ENCODE measurements at regions of chr6 and their contacts with region 1.

Region 1: DNA sequence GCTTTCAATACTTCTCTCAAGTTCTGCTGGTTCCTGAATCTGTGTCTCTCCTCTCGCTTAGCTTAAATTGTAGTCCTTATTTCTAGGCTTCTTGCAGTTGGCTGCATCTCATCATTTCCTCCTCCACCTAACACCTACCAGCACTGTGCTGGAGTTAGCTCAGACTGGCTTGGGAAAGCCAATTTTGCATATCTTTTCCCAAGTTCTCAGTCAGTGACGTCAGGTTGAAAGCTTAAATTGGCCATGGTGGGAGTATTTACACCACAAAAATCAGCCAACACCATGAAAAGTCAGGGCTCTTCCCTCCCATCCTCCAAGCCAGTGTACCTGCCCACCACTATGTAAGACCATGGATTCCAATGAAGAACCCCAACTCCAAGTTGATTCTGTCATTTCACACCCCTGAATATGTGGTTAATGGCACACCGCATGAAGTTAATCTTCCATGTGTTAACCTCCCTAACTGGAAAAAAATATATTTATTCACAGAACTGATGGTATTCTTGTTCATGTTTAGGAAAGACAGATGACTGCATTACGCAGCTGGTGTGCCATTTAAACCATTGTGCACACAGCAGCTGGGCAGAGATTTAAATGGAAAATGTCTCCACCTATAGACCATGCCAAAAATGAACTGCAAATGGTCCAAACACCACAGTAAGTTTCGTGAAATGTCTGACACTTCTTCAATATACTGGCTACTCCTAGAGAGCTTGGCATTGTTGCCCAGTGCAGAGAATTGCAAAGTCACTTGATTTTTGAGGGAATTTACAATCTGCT is 274.1 kb upstream of the MAP3K7 start:
- DNase-seq: no peak
- H3K4me3 Mint-ChIP-seq: no peak overlapping the region
- H3K27ac Mint-ChIP-seq: no peak overlapping the region
- H3K4me1 Mint-ChIP-seq: no peaks in the 10 kb centered on the region
- H3K27me3 Mint-ChIP-seq: peaks cover 5% of the 10 kb centered on the region

Region 2: DNA sequence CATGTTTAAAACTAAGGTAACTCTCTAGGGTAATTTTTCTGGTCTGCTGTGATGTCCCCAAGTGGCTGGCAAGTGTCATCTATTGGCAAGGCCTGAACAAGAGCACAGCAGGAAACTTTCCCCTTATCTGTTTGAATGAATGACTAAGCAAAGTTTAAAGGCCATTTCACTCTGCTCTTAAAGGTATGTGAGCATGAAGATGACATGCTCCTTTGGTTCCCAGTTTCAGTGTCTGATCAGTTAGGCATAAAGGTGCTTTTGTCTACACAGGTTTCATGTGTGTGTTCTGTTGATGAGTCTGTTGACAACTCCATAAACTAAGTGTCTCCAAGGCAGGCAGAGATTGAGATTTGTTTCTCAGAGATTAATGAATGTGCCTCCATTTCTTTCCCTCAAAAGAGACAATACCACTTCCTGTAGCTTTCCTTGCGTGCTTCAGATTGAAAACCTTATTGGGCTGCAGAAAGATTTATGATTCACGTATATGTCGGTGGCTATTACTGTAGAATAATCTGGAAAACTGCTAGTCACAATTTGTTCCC is 358.1 kb before region 1 on chr6:
- CTCF ChIA-PET with region 1: no interaction called
- intact Hi-C with region 1: loop called (anchors 10 kb)
- DNase-seq: no peak
- H3K4me3 Mint-ChIP-seq: no peak overlapping the region
- H3K27ac Mint-ChIP-seq: peak overlapping the region; percentile 9
- H3K4me1 Mint-ChIP-seq: peaks cover 11% of the 10 kb centered on the region
- H3K27me3 Mint-ChIP-seq: no peaks in the 10 kb centered on the region

Region 3: DNA sequence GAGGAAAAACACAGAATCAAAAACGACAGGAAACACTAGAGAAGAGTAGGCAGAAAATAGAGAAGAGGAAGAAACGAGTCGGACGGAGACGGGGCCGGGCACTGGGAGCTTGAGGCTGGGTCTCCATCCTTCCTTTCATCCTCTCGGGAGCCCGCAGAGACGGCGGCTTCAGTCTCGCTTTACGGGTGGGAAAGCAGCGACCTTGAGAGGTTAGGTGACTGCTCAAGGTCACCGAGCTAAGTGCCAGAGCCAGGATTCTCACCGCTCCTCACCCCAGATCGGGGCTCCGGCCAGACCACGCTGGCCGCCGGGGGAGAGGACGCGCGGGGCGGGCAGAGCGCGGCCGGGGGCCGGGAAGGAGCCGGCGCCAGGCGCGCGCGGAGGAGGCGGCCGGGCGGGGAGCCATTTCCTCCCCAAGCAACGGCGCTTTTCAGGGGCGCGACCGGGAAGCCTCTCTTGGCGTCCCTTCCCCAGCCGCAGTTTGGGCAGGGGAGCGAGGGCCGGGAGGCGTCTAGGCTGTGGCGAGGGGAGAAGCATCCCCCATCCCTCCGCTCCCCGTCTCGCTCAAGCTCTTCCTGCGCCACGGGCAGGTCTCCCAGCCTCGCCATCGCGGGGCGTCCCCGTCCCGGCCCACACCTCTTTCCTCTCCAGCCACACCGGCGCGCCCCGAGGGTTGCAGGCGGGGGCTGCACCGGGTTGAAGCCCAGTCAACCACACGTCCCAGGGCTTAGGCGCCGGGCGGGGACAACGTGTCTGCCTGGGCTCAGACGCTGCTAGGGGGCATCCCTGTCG is 250.1 kb before region 1 on chr6:
- CTCF ChIA-PET with region 1: interaction called, 7 read pairs
- intact Hi-C with region 1: loop called (anchors 1 kb)
- DNase-seq: peak; percentile 54
- H3K4me3 Mint-ChIP-seq: peak overlapping the region; percentile 80
- H3K27ac Mint-ChIP-seq: no peak overlapping the region
- H3K4me1 Mint-ChIP-seq: peaks cover 11% of the 10 kb centered on the region
- H3K27me3 Mint-ChIP-seq: peaks cover 39% of the 10 kb centered on the region

Measured in activated naive CD4-positive, alpha-beta T cell treated with anti-CD3 and anti-CD28 coated beads for 36 hours (primary cell).